H1 (cell line): ENCODE measurements at regions of chr2 and their contacts with region 1.

Region 1: DNA sequence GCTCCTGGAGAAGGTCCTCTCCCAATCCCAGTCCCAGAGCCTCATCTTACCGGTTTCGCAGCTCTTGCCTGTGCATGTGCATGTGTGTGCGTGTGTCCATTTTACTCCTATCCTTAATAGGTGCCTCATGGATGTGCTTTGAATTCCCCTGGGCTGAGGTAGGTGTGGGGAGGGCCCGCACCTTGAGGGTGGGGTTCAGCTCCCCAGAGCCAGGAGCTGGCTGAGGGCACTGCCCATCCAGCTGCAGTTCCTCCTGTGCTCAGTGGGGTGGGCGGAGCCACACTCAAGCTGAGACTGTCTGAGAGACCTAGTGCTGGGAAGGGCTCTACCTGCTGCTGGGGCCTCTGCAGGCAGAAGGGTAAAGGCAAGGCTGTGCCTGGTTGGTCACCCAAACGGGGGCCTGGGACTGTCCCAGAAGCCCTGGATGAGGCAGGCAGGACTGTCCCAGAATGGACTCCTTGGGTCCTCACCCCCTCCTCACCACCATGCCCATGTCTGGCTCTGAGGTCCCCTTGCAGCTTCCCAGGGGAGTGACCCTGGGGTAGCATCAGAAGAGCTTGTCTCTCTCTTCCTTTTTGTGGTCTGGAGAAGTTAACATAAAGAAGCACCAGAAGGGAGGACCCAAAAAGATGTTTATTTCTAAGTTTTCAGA is 8.9 kb downstream of the GDF7 start:
- DNase-seq: peak in 1 of 2 experiments; percentile 66
- H3K4me3 ChIP-seq: no peak overlapping the region
- H3K27ac ChIP-seq: no peak overlapping the region
- H3K4me1 ChIP-seq: peaks cover 7 to 32% (median 17%) of the 10 kb centered on the region in 4 experiments
- H3K27me3 ChIP-seq: peaks cover 10 to 42% (median 32%) of the 10 kb centered on the region in 4 experiments
- CTCF ChIP-seq: peak in 1 of 3 experiments; percentile 22; a peak in 2 of 4 replicates
- EP300 ChIP-seq: no peak
- POLR2A ChIP-seq: no peak
- RAD21 ChIP-seq: no peak; a peak in 1 of 4 replicates

Region 2: GRCh38 chr2:20650880-20651730 is 24.7 kb before region 1 on chr2 and contains the start of gene HS1BP3:
- CTCF ChIA-PET with region 1: interaction called, 63 read pairs
- POLR2A ChIA-PET with region 1: interaction called, 6 read pairs
- DNase-seq: peak in 1 of 2 experiments; percentile 91
- H3K4me3 ChIP-seq: peak within 1 kb of the TSS; percentile 47 to 68 (median 56)
- H3K27ac ChIP-seq: no peak within 1 kb of the TSS
- H3K4me1 ChIP-seq: peaks cover 0 to 11% (median 7%) of the 10 kb centered on the region in 4 experiments; a peak in 5 of 7 replicates
- H3K27me3 ChIP-seq: peaks cover 0 to 4% (median under 1%) of the 10 kb centered on the region in 4 experiments; a peak in 4 of 7 replicates
- CTCF ChIP-seq: peak in 2 of 3 experiments; percentile 87 to 92; a peak in 3 of 4 replicates
- EP300 ChIP-seq: peak in 1 of 2 experiments; percentile 60; a peak in 1 of 3 replicates
- POLR2A ChIP-seq: peak in 1 of 2 experiments; percentile 74; a peak in 2 of 3 replicates
- RAD21 ChIP-seq: peak; percentile 49 to 76
- total RNA-seq, gene HS1BP3: 11.1 and 11.2 TPM in 2 replicates

Region 3: GRCh38 chr2:20707601-20708000 is 31.8 kb after region 1 on chr2:
- CTCF ChIA-PET with region 1: interaction called, 16 read pairs
- POLR2A ChIA-PET with region 1: no interaction called
- DNase-seq: no peak
- H3K4me3 ChIP-seq: no peak overlapping the region
- H3K27ac ChIP-seq: no peak overlapping the region
- H3K4me1 ChIP-seq: peaks cover 0 to 3% (median 0%) of the 10 kb centered on the region in 4 experiments; a peak in 2 of 7 replicates
- H3K27me3 ChIP-seq: no peaks in the 10 kb centered on the region
- CTCF ChIP-seq: no peak
- EP300 ChIP-seq: no peak
- POLR2A ChIP-seq: no peak
- RAD21 ChIP-seq: no peak

Region 4: DNA sequence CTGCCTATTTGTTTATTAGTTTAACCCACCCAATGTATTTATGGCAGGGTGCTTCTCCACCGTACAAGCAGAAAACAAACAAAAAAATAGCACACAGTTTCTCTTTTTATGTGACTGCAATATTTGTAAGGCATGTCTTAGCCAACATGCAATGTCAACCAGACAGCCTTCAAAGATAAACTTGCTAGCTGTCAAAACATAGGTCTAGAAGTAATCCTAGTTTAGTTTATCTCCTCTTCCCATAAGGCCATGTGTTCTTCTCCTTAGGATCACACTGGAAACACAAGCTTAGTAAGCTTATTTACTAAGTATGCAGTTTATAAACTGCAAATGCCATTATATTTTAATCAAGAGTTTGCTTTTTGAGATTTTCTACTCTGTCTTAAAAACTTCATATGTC is 71.5 kb after region 1 on chr2:
- CTCF ChIA-PET with region 1: interaction called, 13 read pairs
- POLR2A ChIA-PET with region 1: no interaction called
- DNase-seq: no peak
- H3K4me3 ChIP-seq: no peak overlapping the region
- H3K27ac ChIP-seq: no peak overlapping the region
- H3K4me1 ChIP-seq: no peaks in the 10 kb centered on the region
- H3K27me3 ChIP-seq: no peaks in the 10 kb centered on the region
- CTCF ChIP-seq: no peak
- EP300 ChIP-seq: no peak
- POLR2A ChIP-seq: no peak
- RAD21 ChIP-seq: no peak

Region 5: GRCh38 chr2:20771299-20771698 is 95.5 kb after region 1 on chr2:
- CTCF ChIA-PET with region 1: interaction called, 29 read pairs
- POLR2A ChIA-PET with region 1: no interaction called
- DNase-seq: no peak
- H3K4me3 ChIP-seq: no peak overlapping the region
- H3K27ac ChIP-seq: no peak overlapping the region
- H3K4me1 ChIP-seq: no peaks in the 10 kb centered on the region
- H3K27me3 ChIP-seq: no peaks in the 10 kb centered on the region
- CTCF ChIP-seq: no peak
- EP300 ChIP-seq: no peak
- POLR2A ChIP-seq: no peak
- RAD21 ChIP-seq: no peak

Region 6: DNA sequence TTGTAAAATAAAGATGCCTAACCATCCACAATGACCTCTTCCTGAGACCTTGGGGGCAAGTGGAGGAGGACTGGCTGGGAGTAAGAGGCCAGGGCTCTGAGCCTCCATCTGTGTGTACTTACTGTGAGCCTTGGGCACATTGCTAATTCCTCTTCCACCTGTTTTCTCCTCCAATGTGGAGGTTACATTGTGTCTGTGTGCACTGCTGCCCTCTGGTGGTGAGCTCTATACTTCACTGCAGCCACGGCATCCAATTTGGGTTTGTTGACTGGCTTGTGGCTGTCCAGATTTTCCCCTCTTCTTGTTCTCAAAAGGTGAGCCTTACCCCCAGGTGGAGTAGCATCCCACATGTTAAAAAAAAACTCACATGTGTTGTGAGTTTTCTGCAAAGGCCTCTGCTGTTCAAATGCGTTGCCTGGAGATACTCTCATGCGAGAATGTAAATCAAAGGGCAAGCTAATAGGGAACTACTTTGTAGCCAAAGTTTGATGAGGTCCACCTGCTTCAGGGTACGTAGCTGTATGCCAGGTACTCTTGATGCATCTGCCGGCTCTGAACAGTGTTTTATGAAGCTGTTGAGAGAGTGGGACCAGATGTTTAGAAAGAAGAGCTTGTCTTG is 287.2 kb after region 1 on chr2:
- CTCF ChIA-PET with region 1: interaction called, 55 read pairs
- POLR2A ChIA-PET with region 1: no interaction called
- DNase-seq: peak; percentile 27 to 90
- H3K4me3 ChIP-seq: no peak overlapping the region
- H3K27ac ChIP-seq: no peak overlapping the region
- H3K4me1 ChIP-seq: no peaks in the 10 kb centered on the region
- H3K27me3 ChIP-seq: no peaks in the 10 kb centered on the region
- CTCF ChIP-seq: peak; percentile 85 to 89 (median 85)
- EP300 ChIP-seq: no peak
- POLR2A ChIP-seq: no peak
- RAD21 ChIP-seq: peak; percentile 88

Region 7: DNA sequence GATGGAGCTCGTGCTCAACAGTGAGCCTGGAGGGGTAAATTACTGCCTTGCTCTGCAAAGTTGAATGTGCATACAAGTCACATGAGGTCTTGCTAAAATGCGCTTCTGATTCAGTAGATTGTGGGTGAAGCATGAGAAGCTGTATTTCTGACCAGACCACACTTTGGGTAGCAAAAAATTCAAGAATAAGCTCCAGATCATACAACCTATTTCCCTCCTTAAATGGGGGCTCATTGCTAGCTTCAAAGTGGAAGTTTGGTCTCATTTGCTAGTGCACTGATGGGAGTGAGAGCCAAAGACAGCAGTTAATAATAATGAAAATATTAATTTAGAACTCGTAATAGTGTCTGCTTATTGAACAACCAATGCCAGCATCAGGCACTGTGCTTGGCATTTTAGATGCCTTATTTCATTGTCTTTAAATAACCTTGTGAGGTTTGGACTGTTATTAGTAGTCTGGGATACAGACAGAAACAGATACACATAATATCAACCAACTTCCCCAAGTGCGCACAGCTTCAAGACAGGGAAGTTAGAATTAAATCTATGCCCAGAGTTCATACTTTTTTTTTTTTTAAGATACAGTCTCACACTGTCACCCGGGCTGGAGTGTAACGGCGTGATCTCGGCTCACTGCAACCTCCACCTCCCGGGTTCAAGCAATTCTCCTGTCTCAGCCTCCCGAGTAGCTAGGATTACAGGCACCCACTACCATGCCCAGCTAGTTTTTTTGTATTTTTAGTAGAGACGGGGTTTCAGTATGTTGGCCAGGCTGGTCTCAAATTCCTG is 350.1 kb after region 1 on chr2:
- CTCF ChIA-PET with region 1: interaction called, 12 read pairs
- POLR2A ChIA-PET with region 1: no interaction called
- DNase-seq: no peak
- H3K4me3 ChIP-seq: no peak overlapping the region
- H3K27ac ChIP-seq: no peak overlapping the region
- H3K4me1 ChIP-seq: no peaks in the 10 kb centered on the region
- H3K27me3 ChIP-seq: no peaks in the 10 kb centered on the region
- CTCF ChIP-seq: no peak
- EP300 ChIP-seq: no peak
- POLR2A ChIP-seq: no peak
- RAD21 ChIP-seq: no peak